ENCODE measurements at regions of chr6 and their contacts with region 1.

Region 1: DNA sequence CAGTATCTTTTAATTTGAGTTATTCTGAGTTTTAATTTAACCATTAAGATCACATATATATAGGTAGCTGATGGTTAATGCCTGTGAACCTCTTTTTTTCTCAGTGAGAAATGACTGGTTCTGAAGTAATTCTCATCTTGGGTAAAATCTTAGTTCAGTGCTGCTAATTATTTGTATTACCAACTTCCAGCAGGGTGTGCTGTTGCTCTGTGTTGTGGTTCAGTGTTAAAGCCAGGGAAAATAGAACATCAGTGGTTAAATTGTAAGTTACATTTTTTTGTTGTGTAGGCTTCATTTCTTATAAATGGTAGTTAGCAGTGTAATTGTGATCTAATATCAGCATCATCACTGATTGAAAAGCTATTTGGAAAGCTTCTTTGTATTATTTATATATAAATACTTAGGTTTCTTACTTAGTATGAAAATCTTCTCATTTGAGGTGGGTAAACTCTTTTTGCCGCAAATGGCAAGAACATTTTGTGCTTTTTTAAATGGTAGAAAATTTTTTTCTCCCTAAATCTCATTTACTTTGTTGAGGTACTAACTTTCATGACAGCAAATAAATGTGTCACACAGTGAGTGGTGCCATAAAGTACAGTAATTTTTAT is 43.7 kb downstream of the CDC5L start:
- DNase-seq: peak; percentile 28 to 45
- H3K4me3 ChIP-seq: no peak overlapping the region
- H3K27ac ChIP-seq: no peak overlapping the region
- H3K4me1 ChIP-seq: peaks cover 11% of the 10 kb centered on the region; the same call in 1 of the 2 replicates
- H3K27me3 ChIP-seq: no peaks in the 10 kb centered on the region
- CTCF ChIP-seq: peak; percentile 82

Region 2: GRCh38 chr6:43874267-43874666 is 557.0 kb before region 1 on chr6:
- CTCF ChIA-PET with region 1: no interaction called
- POLR2A ChIA-PET with region 1: no interaction called
- intact Hi-C with region 1: no loop called
- DNase-seq: peak; percentile 75 to 80
- H3K4me3 ChIP-seq: no peak overlapping the region
- H3K27ac ChIP-seq: peak overlapping the region; percentile 72
- H3K4me1 ChIP-seq: peaks cover 54% of the 10 kb centered on the region
- H3K27me3 ChIP-seq: no peaks in the 10 kb centered on the region
- CTCF ChIP-seq: no peak

Region 3: DNA sequence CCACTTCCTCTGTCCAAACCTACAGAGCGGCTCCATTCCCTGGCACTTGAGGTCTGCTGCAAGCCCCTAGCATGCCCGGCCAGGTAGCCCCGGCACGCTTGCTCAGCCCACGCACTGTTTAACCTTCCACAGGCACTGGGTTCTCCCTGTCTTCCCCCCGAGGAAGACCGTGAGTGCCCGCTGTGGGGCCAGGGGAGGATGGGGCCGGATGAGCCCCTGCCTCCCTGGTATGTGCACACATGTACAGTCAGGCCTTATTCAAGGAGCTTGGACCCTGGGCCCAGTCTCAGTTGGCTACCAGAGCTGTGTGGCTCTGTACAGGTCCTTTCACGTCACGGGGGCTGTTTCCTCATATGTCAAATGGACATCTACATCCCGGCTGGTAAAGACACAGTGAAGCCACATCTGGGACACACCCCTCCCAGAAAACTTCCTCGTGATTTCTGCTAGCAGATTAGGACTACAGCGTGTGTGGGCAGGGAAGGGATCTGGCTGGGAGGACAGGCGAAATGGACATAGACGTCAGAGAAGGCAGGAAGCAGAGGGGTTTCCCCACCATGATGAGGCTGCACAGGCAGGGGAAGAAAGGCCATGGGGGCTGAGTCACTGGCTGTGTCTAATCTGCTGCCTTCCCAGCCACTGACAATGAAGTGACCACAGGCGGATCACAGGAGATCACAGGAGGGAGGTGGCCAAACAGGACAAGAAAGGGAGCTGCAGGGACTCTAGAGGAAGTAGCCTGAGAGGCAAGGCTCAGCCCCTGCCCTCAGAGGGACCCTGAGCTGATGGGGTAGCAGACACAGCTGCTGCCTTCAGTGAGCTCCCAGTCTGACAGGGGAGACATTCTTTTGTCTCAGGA is 366.9 kb before region 1 on chr6:
- CTCF ChIA-PET with region 1: no interaction called
- POLR2A ChIA-PET with region 1: no interaction called
- intact Hi-C with region 1: no loop called
- DNase-seq: peak; percentile 71 to 77
- H3K4me3 ChIP-seq: no peak overlapping the region
- H3K27ac ChIP-seq: peak overlapping the region; percentile 60
- H3K4me1 ChIP-seq: peaks cover 65% of the 10 kb centered on the region
- H3K27me3 ChIP-seq: no peaks in the 10 kb centered on the region
- CTCF ChIP-seq: no peak

Region 4: DNA sequence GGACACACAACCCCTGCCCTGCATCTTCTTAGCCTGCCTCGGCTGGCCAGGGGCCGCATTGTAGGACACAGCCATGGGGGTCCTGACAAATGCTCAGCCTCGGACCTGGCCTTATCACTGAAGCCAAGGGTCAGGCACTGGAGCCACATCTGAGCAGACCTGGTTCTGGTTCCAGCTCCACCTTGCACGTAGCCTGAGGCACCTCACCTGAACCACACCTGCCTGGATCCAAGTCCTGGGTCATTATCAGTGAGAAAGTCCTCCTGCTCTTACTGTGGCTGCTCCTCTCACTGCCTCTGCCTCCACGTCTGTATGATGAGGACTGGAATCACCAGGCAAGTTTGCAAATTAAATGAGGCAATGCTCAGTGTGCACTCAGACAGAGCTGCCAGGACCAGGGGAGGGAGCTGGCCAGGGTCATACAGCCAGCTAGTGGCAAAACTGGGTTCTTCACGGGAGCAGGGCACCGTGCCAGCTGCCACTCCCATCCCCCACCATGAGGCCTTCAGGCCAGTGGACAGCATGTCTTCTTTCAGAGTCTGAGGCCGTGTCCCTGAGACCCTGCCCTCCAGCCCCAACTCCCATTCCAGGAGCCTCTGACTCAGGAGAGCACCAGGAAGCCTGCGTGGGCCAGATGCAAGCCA is 344.2 kb before region 1 on chr6:
- CTCF ChIA-PET with region 1: no interaction called
- POLR2A ChIA-PET with region 1: no interaction called
- intact Hi-C with region 1: no loop called
- DNase-seq: peak in 1 of 2 experiments; percentile 58
- H3K4me3 ChIP-seq: no peak overlapping the region
- H3K27ac ChIP-seq: no peak overlapping the region
- H3K4me1 ChIP-seq: peaks cover 13% of the 10 kb centered on the region; the same call in 1 of the 2 replicates
- H3K27me3 ChIP-seq: no peaks in the 10 kb centered on the region
- CTCF ChIP-seq: no peak

Region 5: DNA sequence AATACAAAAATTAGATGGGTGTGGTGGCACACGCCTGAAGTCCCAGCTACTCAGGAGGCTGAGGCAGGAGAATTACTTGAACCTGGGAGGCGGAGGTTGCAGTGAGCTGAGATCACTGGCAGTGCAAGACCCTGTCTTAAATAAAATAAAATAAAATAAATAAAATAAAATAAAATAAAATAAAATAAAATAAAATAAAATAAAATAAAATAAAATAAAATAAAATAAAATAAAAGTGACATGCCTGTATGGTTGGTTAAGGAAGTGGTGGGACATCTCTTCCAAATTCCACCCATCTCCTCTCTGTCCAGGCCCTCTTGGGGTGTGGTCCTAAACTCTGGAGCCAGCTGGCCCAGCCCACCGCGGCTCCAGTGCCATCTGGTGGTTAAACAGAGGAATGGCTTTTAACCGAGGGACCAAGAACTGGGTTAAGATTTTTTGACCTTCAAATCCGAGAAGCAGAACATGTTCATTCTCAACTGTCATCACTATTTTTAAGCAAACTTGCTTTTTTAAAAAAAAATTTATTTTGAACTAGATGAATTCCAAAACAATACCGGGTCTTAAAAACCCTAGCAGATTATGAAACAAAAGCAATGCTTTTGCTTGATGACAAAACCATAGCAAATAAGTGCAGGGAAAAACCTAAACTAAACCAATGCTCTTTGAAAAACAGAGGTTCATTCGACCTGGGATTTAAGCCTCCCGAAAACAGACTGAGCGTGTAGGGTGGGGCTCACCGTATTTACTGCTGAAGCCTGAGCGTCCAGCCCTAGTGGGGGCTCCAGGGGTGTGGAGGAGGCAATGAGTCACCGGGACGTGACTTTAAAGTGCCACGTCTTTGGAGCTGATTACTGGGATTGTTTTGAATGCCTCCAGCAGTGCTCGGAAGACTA is 25.1 kb after region 1 on chr6:
- CTCF ChIA-PET with region 1: interaction called, 7 read pairs
- POLR2A ChIA-PET with region 1: no interaction called
- intact Hi-C with region 1: loop called (anchors 1 kb)
- DNase-seq: peak in 1 of 2 experiments; percentile 33
- H3K4me3 ChIP-seq: peak overlapping the region; percentile 33; the same call in 1 of the 2 replicates
- H3K27ac ChIP-seq: no peak overlapping the region
- H3K4me1 ChIP-seq: peaks cover 24% of the 10 kb centered on the region; the same call in 1 of the 2 replicates
- H3K27me3 ChIP-seq: no peaks in the 10 kb centered on the region
- CTCF ChIP-seq: peak; percentile 90